ENCODE measurements at regions of chr20 and their contacts with region 1.

Region 1: DNA sequence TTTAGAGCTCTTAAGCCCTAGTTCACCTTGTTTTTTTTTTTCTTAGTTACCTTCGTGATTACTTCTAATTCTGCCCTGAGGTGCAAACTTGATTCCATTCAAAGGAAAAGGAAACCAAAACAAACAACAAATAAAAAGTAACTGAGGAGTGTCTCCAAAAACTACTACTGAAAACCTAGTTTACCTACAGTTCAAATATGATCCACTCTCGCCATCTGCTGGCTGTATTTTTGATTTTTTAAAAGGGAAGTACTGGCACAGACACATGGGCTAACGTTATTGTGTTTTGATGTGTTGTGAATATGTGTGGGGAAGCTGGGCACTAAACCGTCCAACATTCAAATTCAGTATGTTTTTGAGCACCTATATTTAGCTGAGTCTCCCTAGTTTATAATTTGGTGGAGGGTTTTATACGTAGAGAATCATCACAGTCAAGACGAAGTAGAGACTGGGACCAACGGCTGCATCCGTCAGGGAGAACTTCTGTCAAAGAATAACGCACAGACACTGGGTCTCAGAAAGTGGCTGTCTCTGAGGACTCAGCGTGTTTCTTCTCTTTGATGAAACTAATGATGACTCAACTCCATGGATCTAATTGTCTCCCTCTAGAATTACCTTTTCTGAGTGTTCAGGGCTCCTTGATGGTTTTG is 373.5 kb upstream of the BTBD3 start:
- DNase-seq: peak; percentile 8 to 13
- H3K4me3 ChIP-seq: no peak overlapping the region
- H3K27ac ChIP-seq: no peak overlapping the region
- H3K4me1 ChIP-seq: no peaks in the 10 kb centered on the region
- H3K27me3 ChIP-seq: no peaks in the 10 kb centered on the region
- CTCF ChIP-seq: peak; percentile 25 to 76 (median 60)
- POLR2A ChIP-seq: no peak

Region 2: DNA sequence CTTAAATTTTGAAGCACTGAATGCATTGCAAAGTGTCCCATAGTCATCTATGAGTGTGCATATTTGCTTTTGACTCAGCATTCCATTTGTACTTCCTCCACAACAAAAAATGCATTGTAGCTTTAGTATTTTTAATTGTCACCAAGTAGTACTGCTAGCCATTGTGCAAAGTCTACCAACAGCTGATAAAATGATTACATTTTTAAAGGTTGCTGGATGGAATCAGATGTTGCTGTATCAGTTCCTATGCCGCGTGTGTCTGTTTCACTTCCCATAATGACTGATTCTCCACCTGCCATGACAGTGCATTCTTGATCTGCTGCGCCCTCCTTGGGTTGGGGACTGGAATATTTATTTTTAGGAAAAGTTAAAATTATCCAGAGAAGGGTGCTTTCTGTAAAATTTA is 1067.8 kb before region 1 on chr20:
- intact Hi-C with region 1: loop called (anchors 5 kb)
- DNase-seq: no peak
- H3K4me3 ChIP-seq: no peak overlapping the region
- H3K27ac ChIP-seq: no peak overlapping the region
- H3K4me1 ChIP-seq: peaks cover 6 to 10% of the 10 kb centered on the region in 2 donors
- H3K27me3 ChIP-seq: no peaks in the 10 kb centered on the region
- CTCF ChIP-seq: no peak
- POLR2A ChIP-seq: no peak

Region 3: DNA sequence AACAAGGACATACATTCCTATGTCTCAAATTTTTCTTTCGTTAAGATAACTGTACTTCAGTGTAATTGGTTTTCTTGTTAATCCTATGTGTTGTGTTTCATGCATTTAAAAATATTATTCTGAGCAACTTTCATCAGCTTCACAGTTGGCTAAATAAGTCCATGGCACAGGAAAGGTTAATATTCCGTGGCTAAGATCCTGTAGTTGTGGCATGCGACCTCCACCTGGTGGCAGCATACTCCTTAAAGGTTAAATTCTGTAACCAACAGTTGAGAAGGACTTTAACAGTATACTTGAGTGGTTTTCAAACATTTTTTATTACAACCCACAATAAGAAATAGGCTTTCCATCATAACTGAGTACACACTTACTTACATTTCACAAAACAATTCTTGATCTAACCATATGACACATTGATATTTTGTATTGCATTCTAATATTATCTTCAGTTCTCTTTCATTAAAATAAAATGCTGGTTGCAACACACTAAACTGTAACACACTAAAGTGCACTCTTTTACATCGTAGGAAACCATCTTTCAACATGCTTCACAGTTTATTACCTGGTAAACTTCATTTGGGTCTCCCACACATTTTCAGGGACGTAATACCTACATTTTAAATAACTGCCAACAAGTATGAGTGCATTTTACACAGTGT is 990.7 kb before region 1 on chr20:
- intact Hi-C with region 1: loop called (anchors 10 kb)
- DNase-seq: peak; percentile 74 to 80
- H3K4me3 ChIP-seq: no peak overlapping the region
- H3K27ac ChIP-seq: no peak overlapping the region
- H3K4me1 ChIP-seq: peaks cover 13 to 21% of the 10 kb centered on the region in 2 donors
- H3K27me3 ChIP-seq: no peaks in the 10 kb centered on the region
- CTCF ChIP-seq: peak; percentile 47 to 92 (median 82)
- POLR2A ChIP-seq: no peak

Region 4: DNA sequence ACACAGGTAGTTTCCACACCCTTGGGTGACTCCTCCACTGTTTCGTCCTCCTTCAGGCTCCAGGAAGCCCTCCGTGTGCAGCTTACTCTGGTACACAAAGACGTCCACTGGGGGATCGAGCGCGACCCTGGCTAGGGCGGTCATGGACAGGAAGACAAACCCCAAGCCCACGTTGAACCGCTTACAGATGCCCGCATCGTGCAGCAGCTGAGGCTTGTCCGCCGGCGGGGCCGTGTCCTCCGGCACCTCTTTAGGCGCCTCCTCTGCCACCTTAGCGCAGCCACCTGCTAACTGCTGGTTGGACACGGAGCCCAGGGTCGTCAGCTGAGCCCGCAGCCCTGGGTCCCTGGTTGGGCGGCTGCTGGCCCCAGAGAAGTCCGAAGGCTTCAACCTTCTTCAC is 64.6 kb after region 1 on chr20:
- intact Hi-C with region 1: no loop called
- DNase-seq: no peak
- H3K4me3 ChIP-seq: no peak overlapping the region
- H3K27ac ChIP-seq: no peak overlapping the region
- H3K4me1 ChIP-seq: no peaks in the 10 kb centered on the region
- H3K27me3 ChIP-seq: no peaks in the 10 kb centered on the region
- CTCF ChIP-seq: no peak
- POLR2A ChIP-seq: no peak

Measured in thyroid gland (tissue), 4 donors.